ENCODE measurements at regions of chr9 and their contacts with region 1.

Region 1: GRCh38 chr9:72526901-72527800 is 5.7 kb downstream of the TMC1 start:
- DNase-seq: peak; percentile 82
- H3K4me3 Mint-ChIP-seq: peak overlapping the region; percentile 65
- H3K27ac Mint-ChIP-seq: peak overlapping the region; percentile 96
- H3K4me1 Mint-ChIP-seq: peaks cover 16% of the 10 kb centered on the region
- H3K27me3 Mint-ChIP-seq: no peaks in the 10 kb centered on the region
- CTCF ChIP-seq: no peak

Region 2: GRCh38 chr9:72203205-72203803 is 323.8 kb before region 1 on chr9:
- CTCF ChIA-PET with region 1: no interaction called
- POLR2A ChIA-PET with region 1: no interaction called
- intact Hi-C with region 1: no loop called
- DNase-seq: peak; percentile 73
- H3K4me3 Mint-ChIP-seq: no peak overlapping the region
- H3K27ac Mint-ChIP-seq: no peak overlapping the region
- H3K4me1 Mint-ChIP-seq: no peaks in the 10 kb centered on the region
- H3K27me3 Mint-ChIP-seq: peaks cover 20% of the 10 kb centered on the region
- CTCF ChIP-seq: peak; percentile 58

Region 3: GRCh38 chr9:72351538-72352453 is 175.4 kb before region 1 on chr9:
- CTCF ChIA-PET with region 1: no interaction called
- POLR2A ChIA-PET with region 1: no interaction called
- intact Hi-C with region 1: no loop called
- DNase-seq: peak; percentile 43
- H3K4me3 Mint-ChIP-seq: no peak overlapping the region
- H3K27ac Mint-ChIP-seq: no peak overlapping the region
- H3K4me1 Mint-ChIP-seq: no peaks in the 10 kb centered on the region
- H3K27me3 Mint-ChIP-seq: no peaks in the 10 kb centered on the region
- CTCF ChIP-seq: no peak

Region 4: DNA sequence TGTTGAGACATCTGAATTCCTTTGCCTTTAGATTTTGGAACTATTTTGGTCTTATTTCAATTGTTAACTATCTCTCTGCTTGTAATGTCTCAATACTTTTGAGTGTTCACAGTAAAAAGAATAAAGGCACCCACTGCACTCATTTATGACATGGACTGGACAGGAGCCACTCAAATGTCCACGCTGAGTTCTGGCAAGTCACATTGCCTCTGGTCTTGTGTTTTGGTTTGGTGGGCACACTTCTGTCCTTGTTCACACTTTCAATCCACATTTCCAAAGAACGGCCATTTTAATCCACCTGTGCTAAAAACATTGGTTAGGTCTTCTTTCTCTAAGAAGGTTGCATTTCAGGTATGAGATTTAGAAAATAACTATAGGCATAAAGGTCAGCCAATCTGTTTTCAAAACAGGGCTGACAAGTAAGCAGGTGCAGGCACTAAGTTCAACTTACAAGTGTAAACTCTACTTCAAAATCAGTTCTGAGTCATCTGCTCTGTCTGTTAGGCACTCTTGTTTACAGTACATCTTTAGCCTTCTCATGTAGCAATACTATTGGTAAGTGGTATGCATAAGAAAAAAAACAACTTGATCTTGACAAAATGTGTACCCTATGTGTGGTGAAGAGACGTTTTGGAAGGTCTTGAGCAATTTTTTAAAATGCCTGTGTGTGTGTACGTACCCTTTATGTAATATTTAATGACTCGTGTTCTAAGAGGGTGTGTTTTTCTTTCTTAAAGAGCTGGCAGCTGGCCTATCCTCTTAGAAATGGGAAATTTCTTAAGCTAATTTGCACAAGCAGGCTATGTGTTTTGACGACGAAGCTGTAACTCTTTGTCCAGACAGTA is 130.7 kb before region 1 on chr9:
- CTCF ChIA-PET with region 1: no interaction called
- POLR2A ChIA-PET with region 1: interaction called, 14 read pairs
- intact Hi-C with region 1: no loop called
- DNase-seq: peak; percentile 84
- H3K4me3 Mint-ChIP-seq: no peak overlapping the region
- H3K27ac Mint-ChIP-seq: peak overlapping the region; percentile 76
- H3K4me1 Mint-ChIP-seq: peaks cover 14% of the 10 kb centered on the region
- H3K27me3 Mint-ChIP-seq: no peaks in the 10 kb centered on the region
- CTCF ChIP-seq: no peak

Region 5: GRCh38 chr9:72509635-72510034 is 17.5 kb before region 1 on chr9:
- CTCF ChIA-PET with region 1: interaction called, 4 read pairs
- POLR2A ChIA-PET with region 1: interaction called, 17 read pairs
- intact Hi-C with region 1: no loop called
- DNase-seq: peak; percentile 17
- H3K4me3 Mint-ChIP-seq: no peak overlapping the region
- H3K27ac Mint-ChIP-seq: peak overlapping the region; percentile 71
- H3K4me1 Mint-ChIP-seq: peaks cover 12% of the 10 kb centered on the region
- H3K27me3 Mint-ChIP-seq: no peaks in the 10 kb centered on the region
- CTCF ChIP-seq: no peak

Region 6: GRCh38 chr9:72557549-72557948 is 30.4 kb after region 1 on chr9:
- CTCF ChIA-PET with region 1: interaction called, 6 read pairs
- POLR2A ChIA-PET with region 1: interaction called, 25 read pairs
- intact Hi-C with region 1: no loop called
- DNase-seq: peak; percentile 93
- H3K4me3 Mint-ChIP-seq: no peak overlapping the region
- H3K27ac Mint-ChIP-seq: peak overlapping the region; percentile 91
- H3K4me1 Mint-ChIP-seq: peaks cover 24% of the 10 kb centered on the region
- H3K27me3 Mint-ChIP-seq: no peaks in the 10 kb centered on the region
- CTCF ChIP-seq: no peak

Region 7: GRCh38 chr9:72586388-72587130 is 59.4 kb after region 1 on chr9:
- CTCF ChIA-PET with region 1: interaction called, 5 read pairs
- POLR2A ChIA-PET with region 1: interaction called, 5 read pairs
- intact Hi-C with region 1: loop called (anchors 2 kb)
- DNase-seq: peak; percentile 98
- H3K4me3 Mint-ChIP-seq: no peak overlapping the region
- H3K27ac Mint-ChIP-seq: peak overlapping the region; percentile 29
- H3K4me1 Mint-ChIP-seq: peaks cover 38% of the 10 kb centered on the region
- H3K27me3 Mint-ChIP-seq: no peaks in the 10 kb centered on the region
- CTCF ChIP-seq: no peak

Region 8: GRCh38 chr9:72864327-72864726 is 337.2 kb after region 1 on chr9:
- CTCF ChIA-PET with region 1: no interaction called
- POLR2A ChIA-PET with region 1: no interaction called
- intact Hi-C with region 1: no loop called
- DNase-seq: no peak
- H3K4me3 Mint-ChIP-seq: no peak overlapping the region
- H3K27ac Mint-ChIP-seq: no peak overlapping the region
- H3K4me1 Mint-ChIP-seq: no peaks in the 10 kb centered on the region
- H3K27me3 Mint-ChIP-seq: peaks cover 58% of the 10 kb centered on the region
- CTCF ChIP-seq: no peak